ENCODE measurements at regions of chr20 and their contacts with region 1.

Region 1: GRCh38 chr20:17825960-17826843 is 126.4 kb downstream of the BANF2 start:
- DNase-seq: no peak
- H3K4me3 ChIP-seq: no peak overlapping the region
- H3K27ac ChIP-seq: no peak overlapping the region
- H3K4me1 ChIP-seq: no peaks in the 10 kb centered on the region
- H3K27me3 ChIP-seq: no peaks in the 10 kb centered on the region
- CTCF ChIP-seq: no peak

Region 2: DNA sequence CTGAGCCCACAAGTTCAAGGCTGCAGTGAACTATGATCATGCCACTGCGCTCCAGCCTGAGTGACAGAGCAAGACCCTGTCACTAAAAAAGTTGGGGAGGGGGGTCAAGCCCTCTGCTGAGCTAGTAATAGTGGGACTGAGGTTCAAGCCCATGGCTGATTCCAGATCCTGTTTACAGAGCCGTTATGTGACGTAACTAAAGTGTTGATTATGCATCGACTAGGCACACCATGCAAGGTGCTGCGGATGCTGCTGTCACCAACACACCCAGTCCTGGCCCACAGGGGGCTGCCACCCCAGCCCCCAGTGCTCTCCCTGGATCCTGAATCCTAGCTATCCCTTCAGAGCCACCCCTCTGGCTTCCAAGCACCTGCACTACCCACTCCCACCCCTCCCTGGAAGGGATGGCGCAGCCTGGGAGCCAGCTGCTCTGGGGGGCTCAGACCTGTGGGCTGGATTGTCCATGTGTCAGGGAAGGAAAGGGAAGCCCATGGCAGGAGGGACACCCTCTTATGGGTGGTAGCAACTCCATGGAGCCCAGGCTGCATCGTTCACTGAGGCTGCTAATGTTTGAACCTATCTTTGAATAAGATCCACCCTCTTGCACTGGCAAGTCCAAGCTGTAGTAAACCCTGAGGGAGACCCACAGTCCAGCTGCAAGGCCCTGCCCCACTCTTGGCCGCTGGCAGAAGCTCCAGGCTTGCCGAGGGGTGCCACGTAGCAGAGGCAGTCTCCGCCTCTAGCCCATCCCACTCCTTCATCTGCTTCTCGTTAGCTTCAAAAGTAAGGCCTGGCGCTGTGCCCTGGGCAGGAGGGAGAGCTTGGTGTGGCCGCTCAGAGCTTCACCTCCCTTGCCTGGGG is 47.4 kb after region 1 on chr20:
- CTCF ChIA-PET with region 1: no interaction called
- dilution Hi-C with region 1: loop called (anchors 5 kb)
- in situ Hi-C with region 1: no loop called
- intact Hi-C with region 1: no loop called
- DNase-seq: no peak
- H3K4me3 ChIP-seq: peak overlapping the region in 1 of 3 experiments; percentile 3
- H3K27ac ChIP-seq: no peak overlapping the region
- H3K4me1 ChIP-seq: peaks cover 20% of the 10 kb centered on the region
- H3K27me3 ChIP-seq: no peaks in the 10 kb centered on the region
- CTCF ChIP-seq: no peak

Region 3: DNA sequence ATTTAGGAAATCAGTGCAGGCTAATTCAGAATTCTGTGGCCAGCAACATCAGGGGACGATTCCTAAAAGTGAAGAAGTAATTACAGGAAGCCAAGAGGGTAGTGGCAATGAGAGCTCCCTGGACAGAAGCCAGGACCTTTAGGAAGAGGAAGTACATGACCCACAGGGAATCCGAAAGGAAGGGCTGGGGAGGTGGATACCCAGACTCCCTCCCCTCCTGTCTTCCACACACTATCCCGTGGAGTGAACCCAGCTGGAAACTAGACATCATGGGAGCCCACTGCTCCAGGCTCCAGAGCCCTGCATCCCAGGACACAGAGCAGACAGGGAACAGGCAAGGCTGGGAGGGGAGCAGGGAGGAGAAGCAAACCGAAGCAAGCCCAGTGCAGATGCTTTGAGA is 59.3 kb after region 1 on chr20:
- CTCF ChIA-PET with region 1: no interaction called
- dilution Hi-C with region 1: no loop called
- in situ Hi-C with region 1: loop called in 1 of 2 experiments (anchors 10 kb)
- intact Hi-C with region 1: no loop called
- DNase-seq: no peak
- H3K4me3 ChIP-seq: no peak overlapping the region
- H3K27ac ChIP-seq: no peak overlapping the region
- H3K4me1 ChIP-seq: peaks cover 31% of the 10 kb centered on the region
- H3K27me3 ChIP-seq: no peaks in the 10 kb centered on the region
- CTCF ChIP-seq: no peak

Region 4: GRCh38 chr20:18224968-18225568 is 398.9 kb after region 1 on chr20:
- CTCF ChIA-PET with region 1: no interaction called
- dilution Hi-C with region 1: no loop called
- in situ Hi-C with region 1: no loop called
- intact Hi-C with region 1: no loop called
- DNase-seq: peak; percentile 72
- H3K4me3 ChIP-seq: no peak overlapping the region
- H3K27ac ChIP-seq: peak overlapping the region; percentile 56
- H3K4me1 ChIP-seq: peaks cover 30% of the 10 kb centered on the region
- H3K27me3 ChIP-seq: no peaks in the 10 kb centered on the region
- CTCF ChIP-seq: no peak